Activated CD4-positive, alpha-beta memory T cell treated with anti-CD3 and anti-CD28 coated beads for 36 hours (primary cell): ENCODE measurements at regions of chr7 and their contacts with region 1.

Region 1: DNA sequence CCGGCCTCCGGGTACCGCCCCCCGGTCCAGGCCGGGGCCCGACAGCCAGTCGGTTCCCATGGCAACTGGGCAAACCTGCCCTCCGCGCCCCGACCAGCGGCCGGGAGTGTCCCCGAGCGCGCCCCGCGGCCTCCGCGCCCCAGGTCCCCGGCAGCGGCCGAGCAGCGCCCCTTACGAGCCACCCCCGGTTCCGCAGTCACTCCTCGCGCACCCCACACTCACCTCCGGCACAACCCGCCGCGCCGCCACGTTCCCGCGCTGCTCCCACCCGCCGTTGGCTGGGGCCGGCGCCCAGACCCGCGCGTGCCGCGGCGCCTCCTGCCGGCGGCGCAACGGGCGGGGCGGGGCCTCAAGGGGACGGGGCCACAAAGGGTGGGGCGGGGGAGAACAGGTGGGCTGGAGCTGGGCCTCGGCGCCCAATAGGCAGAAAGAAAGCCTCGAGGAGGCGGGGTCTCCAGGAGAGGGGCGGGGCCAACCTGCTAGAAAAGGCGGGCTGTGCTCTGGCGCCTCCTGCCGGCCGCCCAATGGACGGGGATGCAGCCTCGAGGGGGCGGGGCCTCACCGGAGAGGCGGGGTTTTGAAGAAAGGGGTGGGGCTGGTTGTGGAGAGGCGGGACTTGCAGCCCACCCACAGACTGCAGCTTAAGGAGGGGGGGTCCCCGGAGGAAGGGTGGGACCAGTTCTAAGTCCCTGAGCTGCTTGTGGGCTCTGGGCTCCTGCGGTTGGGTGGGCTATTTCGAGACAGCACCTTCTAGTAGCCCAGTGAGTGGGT is at the start of gene RADIL:
- DNase-seq: peak; percentile 94
- H3K4me3 Mint-ChIP-seq: peak within 1 kb of the TSS; percentile 51
- H3K27ac Mint-ChIP-seq: no peak within 1 kb of the TSS
- H3K4me1 Mint-ChIP-seq: peaks cover 10% of the 10 kb centered on the region
- H3K27me3 Mint-ChIP-seq: peaks cover 27% of the 10 kb centered on the region
- total RNA-seq, gene RADIL: 0.15 to 0.19 TPM

Region 2: GRCh38 chr7:4610768-4611467 is 272.6 kb before region 1 on chr7:
- CTCF ChIA-PET with region 1: no interaction called
- POLR2A ChIA-PET with region 1: no interaction called
- intact Hi-C with region 1: loop called (anchors 1 kb)
- DNase-seq: peak; percentile 56
- H3K4me3 Mint-ChIP-seq: no peak overlapping the region
- H3K27ac Mint-ChIP-seq: no peak overlapping the region
- H3K4me1 Mint-ChIP-seq: peaks cover 9% of the 10 kb centered on the region
- H3K27me3 Mint-ChIP-seq: no peaks in the 10 kb centered on the region

Region 3: GRCh38 chr7:4791738-4792536 is 91.6 kb before region 1 on chr7:
- CTCF ChIA-PET with region 1: interaction called, 13 read pairs
- POLR2A ChIA-PET with region 1: no interaction called
- intact Hi-C with region 1: no loop called
- DNase-seq: peak; percentile 84
- H3K4me3 Mint-ChIP-seq: no peak overlapping the region
- H3K27ac Mint-ChIP-seq: no peak overlapping the region
- H3K4me1 Mint-ChIP-seq: no peaks in the 10 kb centered on the region
- H3K27me3 Mint-ChIP-seq: no peaks in the 10 kb centered on the region

Region 4: DNA sequence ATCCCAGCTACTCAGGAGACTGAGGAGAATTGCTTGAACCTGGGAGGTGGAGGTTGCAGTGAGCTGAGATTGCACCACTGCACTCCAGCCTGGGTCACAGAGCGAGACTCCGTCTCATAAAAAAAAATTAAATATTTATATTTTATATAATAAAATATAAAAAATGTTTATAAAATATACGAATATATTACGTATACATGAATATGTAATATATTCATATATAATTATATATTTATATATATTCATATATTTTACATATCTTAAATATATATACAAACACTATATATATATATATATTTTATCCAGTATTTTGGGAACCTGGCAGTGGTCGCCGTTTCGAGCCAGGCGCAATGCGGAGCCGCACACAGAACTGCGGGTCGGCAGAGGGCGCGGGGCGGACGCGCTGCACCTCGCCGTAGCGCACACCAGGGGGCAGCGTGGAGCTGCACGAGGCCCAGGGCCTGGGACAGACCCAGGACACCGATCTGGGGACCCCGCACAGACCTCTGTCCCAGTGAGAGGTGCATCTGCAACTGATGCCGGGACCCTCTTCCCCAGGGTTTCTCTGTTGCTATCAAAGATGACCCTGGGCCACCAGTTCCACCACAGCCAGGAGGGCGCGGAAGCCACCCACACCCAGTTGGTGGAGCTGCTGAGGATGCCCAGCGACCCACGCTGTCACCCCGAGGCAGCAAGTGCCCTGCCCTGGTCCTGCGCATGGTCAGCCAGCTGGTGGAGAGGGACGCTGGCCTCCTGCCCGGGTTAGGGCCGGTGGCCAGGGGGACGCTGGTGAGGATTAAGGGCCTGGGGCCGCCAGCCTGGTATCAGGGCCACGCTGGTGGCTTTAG is 85.5 kb before region 1 on chr7:
- CTCF ChIA-PET with region 1: interaction called, 19 read pairs
- POLR2A ChIA-PET with region 1: no interaction called
- intact Hi-C with region 1: loop called (anchors 1 kb)
- DNase-seq: peak; percentile 74
- H3K4me3 Mint-ChIP-seq: no peak overlapping the region
- H3K27ac Mint-ChIP-seq: no peak overlapping the region
- H3K4me1 Mint-ChIP-seq: no peaks in the 10 kb centered on the region
- H3K27me3 Mint-ChIP-seq: no peaks in the 10 kb centered on the region

Region 5: GRCh38 chr7:4815609-4816418 is 67.7 kb before region 1 on chr7:
- CTCF ChIA-PET with region 1: no interaction called
- POLR2A ChIA-PET with region 1: no interaction called
- intact Hi-C with region 1: no loop called
- DNase-seq: no peak
- H3K4me3 Mint-ChIP-seq: no peak overlapping the region
- H3K27ac Mint-ChIP-seq: no peak overlapping the region
- H3K4me1 Mint-ChIP-seq: no peaks in the 10 kb centered on the region
- H3K27me3 Mint-ChIP-seq: peaks cover 18% of the 10 kb centered on the region

Region 6: DNA sequence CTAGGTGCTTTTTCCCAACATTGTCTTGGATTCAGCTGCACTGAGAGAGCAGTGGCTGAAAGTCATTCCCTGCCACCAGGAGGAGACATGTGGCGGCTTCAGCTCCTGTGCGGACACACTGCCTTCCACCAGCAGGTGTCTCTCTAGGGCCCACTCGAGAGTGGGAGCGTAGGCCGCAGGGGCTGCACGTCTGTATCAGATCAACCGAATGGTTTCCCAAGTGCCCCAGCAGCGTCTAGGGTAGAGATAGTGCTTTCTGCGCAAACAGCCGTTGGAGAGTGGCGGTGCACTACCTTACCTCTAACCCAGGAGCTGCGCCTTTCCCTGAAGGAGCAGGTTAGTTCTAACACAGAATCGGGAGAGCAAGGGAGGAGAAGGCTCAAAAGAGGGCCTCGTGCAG is 53.4 kb before region 1 on chr7:
- CTCF ChIA-PET with region 1: interaction called, 18 read pairs
- POLR2A ChIA-PET with region 1: no interaction called
- intact Hi-C with region 1: loop called (anchors 1 kb)
- DNase-seq: peak; percentile 72
- H3K4me3 Mint-ChIP-seq: no peak overlapping the region
- H3K27ac Mint-ChIP-seq: no peak overlapping the region
- H3K4me1 Mint-ChIP-seq: peaks cover 2% of the 10 kb centered on the region
- H3K27me3 Mint-ChIP-seq: peaks cover 1% of the 10 kb centered on the region

Region 7: GRCh38 chr7:4849369-4849768 is 34.2 kb before region 1 on chr7:
- CTCF ChIA-PET with region 1: interaction called, 5 read pairs
- POLR2A ChIA-PET with region 1: no interaction called
- intact Hi-C with region 1: loop called (anchors 1 kb)
- DNase-seq: peak; percentile 37
- H3K4me3 Mint-ChIP-seq: no peak overlapping the region
- H3K27ac Mint-ChIP-seq: no peak overlapping the region
- H3K4me1 Mint-ChIP-seq: peaks cover 3% of the 10 kb centered on the region
- H3K27me3 Mint-ChIP-seq: peaks cover 2% of the 10 kb centered on the region

Region 8: GRCh38 chr7:4973728-4974198 is 90.2 kb after region 1 on chr7:
- CTCF ChIA-PET with region 1: interaction called, 12 read pairs
- POLR2A ChIA-PET with region 1: no interaction called
- intact Hi-C with region 1: no loop called
- DNase-seq: peak; percentile 96
- H3K4me3 Mint-ChIP-seq: peak overlapping the region; percentile 97
- H3K27ac Mint-ChIP-seq: peak overlapping the region; percentile 92
- H3K4me1 Mint-ChIP-seq: peaks cover 19% of the 10 kb centered on the region
- H3K27me3 Mint-ChIP-seq: no peaks in the 10 kb centered on the region